Activated naive CD4-positive, alpha-beta T cell treated with anti-CD3 and anti-CD28 coated beads, Interleukin-2, amount 10 ng/mL, durations not matched to agents 7 days and 5 days (primary cell): ENCODE measurements at regions of chr6 and their contacts with region 1.

Region 1: DNA sequence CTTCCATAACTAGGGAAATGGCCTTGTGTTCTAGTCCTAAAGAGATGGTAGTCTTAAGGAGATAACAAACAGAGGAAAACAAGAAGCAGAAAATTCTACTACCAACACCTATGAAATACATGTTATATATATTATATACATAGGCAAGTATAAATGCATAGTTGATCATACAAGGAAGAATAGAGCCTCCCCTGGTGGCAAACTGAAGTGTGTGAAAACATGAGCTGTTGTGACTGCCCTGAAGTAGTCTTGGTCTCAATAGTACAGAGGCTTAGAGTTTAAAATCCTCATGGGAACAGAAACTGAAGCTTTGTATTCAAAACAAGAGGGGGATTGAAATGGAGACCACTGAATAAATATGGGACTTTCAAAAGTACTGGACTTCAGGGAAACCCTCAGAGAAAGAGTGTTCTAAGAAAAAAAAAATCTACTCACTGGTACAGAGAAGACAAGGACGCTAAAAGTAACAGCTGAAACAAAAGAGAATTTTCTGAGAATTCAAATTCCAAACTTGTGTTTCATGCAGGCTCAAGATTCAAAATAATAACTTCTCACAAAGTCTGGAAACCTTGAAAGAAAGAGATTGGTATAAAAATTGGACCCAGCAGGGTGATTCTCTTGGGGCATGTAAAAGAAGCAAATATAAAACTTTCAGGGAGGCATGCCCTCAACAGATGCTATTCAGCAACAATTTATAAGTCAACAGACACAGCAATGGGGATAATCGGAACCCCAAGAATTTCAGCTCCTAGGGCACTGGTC is 59.7 kb upstream of the SAMD3 start:
- DNase-seq: peak; percentile 58
- H3K4me3 Mint-ChIP-seq: no peak overlapping the region
- H3K27ac Mint-ChIP-seq: peak overlapping the region; percentile 50
- H3K4me1 Mint-ChIP-seq: peaks cover 14% of the 10 kb centered on the region
- H3K27me3 Mint-ChIP-seq: no peaks in the 10 kb centered on the region

Region 2: DNA sequence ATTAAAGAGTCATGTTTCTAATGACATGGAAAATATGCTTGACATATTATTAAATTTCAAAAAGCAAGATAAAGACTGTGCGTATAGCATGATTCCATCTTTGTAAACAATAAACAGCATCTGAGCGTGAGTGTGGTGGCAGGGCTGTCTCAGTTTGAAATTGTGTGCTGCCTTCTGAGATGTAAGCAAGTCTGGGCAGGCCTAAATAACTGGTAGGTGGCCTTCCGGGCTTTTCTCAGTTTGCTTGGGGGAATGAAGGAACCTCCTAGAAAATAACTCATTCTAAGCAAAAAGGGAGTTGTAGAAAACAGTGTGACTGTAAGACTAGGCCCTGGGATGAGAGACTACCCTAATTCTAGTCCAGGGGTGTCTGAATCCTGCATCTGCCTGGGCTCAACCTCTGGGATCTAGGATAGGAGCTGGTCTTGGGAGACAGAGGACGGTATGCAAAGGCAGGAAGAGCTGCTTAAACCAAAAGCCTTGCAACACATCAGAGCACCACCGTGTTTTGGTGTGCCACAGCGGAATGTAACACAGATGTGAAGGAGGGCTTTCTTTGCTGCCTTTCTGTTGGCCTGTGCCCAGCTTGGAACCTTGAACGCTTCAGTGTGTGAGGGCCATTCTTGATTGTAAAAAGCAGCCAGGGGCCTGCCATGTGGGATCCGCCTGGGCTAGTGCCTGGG is 327.5 kb before region 1 on chr6:
- CTCF ChIA-PET with region 1: no interaction called
- DNase-seq: no peak
- H3K4me3 Mint-ChIP-seq: no peak overlapping the region
- H3K27ac Mint-ChIP-seq: no peak overlapping the region
- H3K4me1 Mint-ChIP-seq: no peaks in the 10 kb centered on the region
- H3K27me3 Mint-ChIP-seq: peaks cover 8% of the 10 kb centered on the region

Region 3: GRCh38 chr6:130020907-130021629 is 261.3 kb before region 1 on chr6:
- CTCF ChIA-PET with region 1: interaction called, 10 read pairs
- DNase-seq: peak; percentile 86
- H3K4me3 Mint-ChIP-seq: peak overlapping the region; percentile 96
- H3K27ac Mint-ChIP-seq: peak overlapping the region; percentile 99
- H3K4me1 Mint-ChIP-seq: peaks cover 29% of the 10 kb centered on the region
- H3K27me3 Mint-ChIP-seq: peaks cover 9% of the 10 kb centered on the region

Region 4: GRCh38 chr6:130076512-130076911 is 205.9 kb before region 1 on chr6:
- CTCF ChIA-PET with region 1: interaction called, 10 read pairs
- DNase-seq: no peak
- H3K4me3 Mint-ChIP-seq: no peak overlapping the region
- H3K27ac Mint-ChIP-seq: no peak overlapping the region
- H3K4me1 Mint-ChIP-seq: peaks cover 31% of the 10 kb centered on the region
- H3K27me3 Mint-ChIP-seq: no peaks in the 10 kb centered on the region